Activated CD8-positive, alpha-beta T cell treated with anti-CD3 and anti-CD28 coated beads, Interleukin-2, amount 10 ng/mL, durations not matched to agents 7 days and 5 days (primary cell): ENCODE measurements at regions of chr11 and their contacts with region 1.

Region 1: GRCh38 chr11:46315033-46315738 is 32.1 kb upstream of the DGKZ start:
- DNase-seq: peak; percentile 83
- ATAC-seq: peak; percentile 67
- H3K4me3 Mint-ChIP-seq: no peak overlapping the region
- H3K27ac Mint-ChIP-seq: no peak overlapping the region
- H3K4me1 Mint-ChIP-seq: peaks cover 25% of the 10 kb centered on the region
- H3K27me3 Mint-ChIP-seq: no peaks in the 10 kb centered on the region

Region 2: DNA sequence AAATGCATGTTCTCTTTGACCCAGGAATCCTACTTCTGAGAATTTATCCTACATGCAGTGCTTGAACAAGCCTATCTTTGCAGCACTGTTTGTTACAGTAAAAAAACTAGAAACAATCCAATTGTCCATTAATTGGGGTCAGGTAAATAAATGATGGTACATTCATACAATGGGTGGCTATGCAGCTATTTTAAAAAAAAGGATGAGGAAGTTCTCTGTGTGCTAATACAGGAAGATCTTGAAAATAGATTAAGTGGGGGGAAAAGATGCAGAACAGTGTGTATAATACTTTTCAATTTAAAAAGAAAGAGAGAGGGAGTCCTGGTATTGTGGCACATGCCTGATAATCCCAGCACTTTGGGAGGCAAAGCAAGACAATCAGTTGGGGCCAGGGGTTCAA is 47.3 kb before region 1 on chr11:
- CTCF ChIA-PET with region 1: no interaction called
- POLR2A ChIA-PET with region 1: no interaction called
- DNase-seq: no peak
- ATAC-seq: no peak
- H3K4me3 Mint-ChIP-seq: no peak overlapping the region
- H3K27ac Mint-ChIP-seq: no peak overlapping the region
- H3K4me1 Mint-ChIP-seq: peaks cover 4% of the 10 kb centered on the region
- H3K27me3 Mint-ChIP-seq: peaks cover 9% of the 10 kb centered on the region

Region 3: GRCh38 chr11:46295312-46296058 is 19.7 kb before region 1 on chr11:
- CTCF ChIA-PET with region 1: interaction called, 10 read pairs
- POLR2A ChIA-PET with region 1: no interaction called
- DNase-seq: peak; percentile 75
- ATAC-seq: peak; percentile 100
- H3K4me3 Mint-ChIP-seq: peak overlapping the region; percentile 79
- H3K27ac Mint-ChIP-seq: no peak overlapping the region
- H3K4me1 Mint-ChIP-seq: peaks cover 7% of the 10 kb centered on the region
- H3K27me3 Mint-ChIP-seq: peaks cover 27% of the 10 kb centered on the region

Region 4: GRCh38 chr11:46332568-46333393 is 17.6 kb after region 1 on chr11:
- CTCF ChIA-PET with region 1: interaction called, 92 read pairs
- POLR2A ChIA-PET with region 1: interaction called, 3 read pairs
- DNase-seq: no peak
- ATAC-seq: peak; percentile 43
- H3K4me3 Mint-ChIP-seq: peak overlapping the region; percentile 34
- H3K27ac Mint-ChIP-seq: no peak overlapping the region
- H3K4me1 Mint-ChIP-seq: peaks cover 46% of the 10 kb centered on the region
- H3K27me3 Mint-ChIP-seq: peaks cover 47% of the 10 kb centered on the region